Panc1 (cell line): ENCODE measurements at regions of chr9 and their contacts with region 1.

Region 1: DNA sequence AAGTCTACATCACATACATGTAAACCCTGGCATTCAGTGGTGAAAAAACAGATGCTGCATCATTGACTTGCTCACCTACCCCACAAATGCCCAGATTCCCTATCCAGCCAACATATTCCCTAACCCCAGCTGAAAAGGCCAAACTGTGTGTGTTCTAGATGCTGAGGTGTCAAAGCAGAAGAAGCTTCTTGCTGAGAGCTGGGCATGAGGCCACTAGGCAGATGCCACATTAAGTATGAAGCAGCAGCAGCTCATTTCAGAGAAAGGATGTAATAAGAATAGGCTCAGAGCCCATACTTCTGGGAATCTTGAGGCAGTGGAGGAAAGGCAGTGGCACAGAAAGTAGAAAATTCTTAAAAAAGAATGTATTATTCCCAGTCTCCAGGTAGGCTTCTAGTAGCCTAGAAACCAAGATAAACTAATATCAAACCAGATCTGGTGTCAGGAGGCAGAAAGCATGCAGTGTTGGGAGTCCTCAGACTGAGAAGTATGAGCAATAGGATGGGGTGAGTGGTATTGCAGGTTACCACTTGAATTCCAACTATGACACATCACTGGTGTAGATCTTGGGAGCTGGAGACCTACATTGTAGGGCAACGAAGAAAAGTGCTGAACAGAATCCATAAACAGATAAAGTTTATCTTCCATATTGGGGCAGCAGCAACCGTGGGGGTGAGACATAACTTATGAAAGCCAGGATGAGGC is 71.9 kb upstream of the GRHPR start:
- DNase-seq: no peak
- ATAC-seq: peak; percentile 62
- H3K4me3 ChIP-seq: no peak overlapping the region
- H3K27ac ChIP-seq: no peak overlapping the region
- H3K4me1 ChIP-seq: no peaks in the 10 kb centered on the region
- H3K27me3 ChIP-seq: no peaks in the 10 kb centered on the region
- CTCF ChIP-seq: no peak

Region 2: GRCh38 chr9:37302277-37302676 is 48.4 kb before region 1 on chr9:
- CTCF ChIA-PET with region 1: no interaction called
- POLR2A ChIA-PET with region 1: no interaction called
- in situ Hi-C with region 1: loop called (anchors 5 kb)
- intact Hi-C with region 1: no loop called
- DNase-seq: no peak
- ATAC-seq: no peak
- H3K4me3 ChIP-seq: no peak overlapping the region
- H3K27ac ChIP-seq: no peak overlapping the region
- H3K4me1 ChIP-seq: no peaks in the 10 kb centered on the region
- H3K27me3 ChIP-seq: no peaks in the 10 kb centered on the region
- CTCF ChIP-seq: no peak

Region 3: DNA sequence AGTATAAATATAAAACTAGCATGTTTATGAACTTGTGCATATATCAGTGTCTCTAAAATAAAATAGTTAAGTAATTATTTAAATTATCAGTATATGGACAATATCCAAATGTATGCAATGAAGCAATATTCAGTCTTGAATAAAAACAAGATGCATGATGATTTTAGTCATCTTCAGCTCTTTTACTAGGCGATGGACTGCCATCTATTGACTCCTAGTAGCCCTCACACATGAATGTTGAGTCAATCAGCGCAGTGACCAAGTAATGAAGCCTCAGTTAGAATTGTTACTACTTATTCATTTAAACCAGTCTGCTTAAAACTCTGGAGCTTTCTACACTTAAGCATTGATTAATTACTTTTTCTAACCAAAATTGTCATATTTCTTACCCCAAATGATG is 21.1 kb before region 1 on chr9:
- CTCF ChIA-PET with region 1: interaction called, 10 read pairs
- POLR2A ChIA-PET with region 1: no interaction called
- in situ Hi-C with region 1: no loop called
- intact Hi-C with region 1: no loop called
- DNase-seq: peak; percentile 20
- ATAC-seq: peak; percentile 84
- H3K4me3 ChIP-seq: no peak overlapping the region
- H3K27ac ChIP-seq: no peak overlapping the region
- H3K4me1 ChIP-seq: peaks cover 5% of the 10 kb centered on the region; the same call in 1 of the 2 replicates
- H3K27me3 ChIP-seq: no peaks in the 10 kb centered on the region
- CTCF ChIP-seq: peak; percentile 67; the same call in 1 of the 2 replicates

Region 4: GRCh38 chr9:37385286-37385685 is 34.6 kb after region 1 on chr9:
- CTCF ChIA-PET with region 1: no interaction called
- POLR2A ChIA-PET with region 1: no interaction called
- in situ Hi-C with region 1: no loop called
- intact Hi-C with region 1: no loop called
- DNase-seq: no peak
- ATAC-seq: no peak
- H3K4me3 ChIP-seq: no peak overlapping the region
- H3K27ac ChIP-seq: no peak overlapping the region
- H3K4me1 ChIP-seq: no peaks in the 10 kb centered on the region
- H3K27me3 ChIP-seq: no peaks in the 10 kb centered on the region
- CTCF ChIP-seq: no peak

Region 5: DNA sequence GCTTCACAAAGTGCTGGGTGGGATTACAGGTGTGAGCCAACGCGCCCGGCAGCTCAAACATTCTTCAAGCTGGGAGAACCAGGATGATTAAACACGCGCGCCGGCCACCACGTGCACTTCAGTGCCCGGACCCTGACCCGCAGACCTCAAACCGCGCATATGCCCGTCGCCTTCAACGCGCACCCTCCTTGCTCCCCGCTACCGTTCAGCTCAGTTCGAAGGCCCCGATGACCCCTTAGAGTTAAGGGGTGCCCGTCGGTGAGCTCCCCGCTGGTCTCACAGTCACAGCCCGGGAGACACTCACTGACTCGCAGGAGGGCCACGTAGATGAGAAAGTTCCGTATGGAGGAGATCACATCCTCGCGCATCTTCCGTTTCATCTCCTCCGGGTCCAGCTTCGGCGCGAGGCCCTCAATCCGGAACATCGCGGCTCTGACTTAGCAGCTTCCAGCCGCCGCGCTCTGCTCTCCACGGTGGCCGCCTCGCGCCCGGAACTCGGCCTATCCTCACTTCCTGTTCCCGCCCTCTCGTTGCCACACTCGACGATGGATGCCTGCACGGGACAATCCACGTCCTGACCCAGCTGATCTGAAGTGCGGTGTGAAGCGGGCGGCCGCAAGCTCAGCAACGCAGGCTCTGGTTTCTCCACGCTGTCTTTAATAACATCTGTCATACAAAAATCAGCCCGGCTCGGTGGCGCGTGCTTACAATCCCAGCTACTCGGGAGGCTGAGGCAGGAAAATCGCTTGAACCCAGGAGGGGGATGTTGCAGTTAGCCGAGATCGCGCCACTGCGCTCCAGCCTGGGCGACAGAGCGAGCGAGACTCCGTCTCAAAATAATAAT is 241.7 kb after region 1 on chr9 and contains the start of gene TOMM5:
- CTCF ChIA-PET with region 1: no interaction called
- POLR2A ChIA-PET with region 1: no interaction called
- in situ Hi-C with region 1: no loop called
- intact Hi-C with region 1: no loop called
- DNase-seq: peak; percentile 92
- ATAC-seq: peak; percentile 97
- H3K4me3 ChIP-seq: peak within 1 kb of the TSS; percentile 74 to 95
- H3K27ac ChIP-seq: peak within 1 kb of the TSS; percentile 94
- H3K4me1 ChIP-seq: peaks cover 26% of the 10 kb centered on the region
- H3K27me3 ChIP-seq: peaks cover 17% of the 10 kb centered on the region
- CTCF ChIP-seq: no peak
- total RNA-seq, gene TOMM5: 333 TPM

Region 6: DNA sequence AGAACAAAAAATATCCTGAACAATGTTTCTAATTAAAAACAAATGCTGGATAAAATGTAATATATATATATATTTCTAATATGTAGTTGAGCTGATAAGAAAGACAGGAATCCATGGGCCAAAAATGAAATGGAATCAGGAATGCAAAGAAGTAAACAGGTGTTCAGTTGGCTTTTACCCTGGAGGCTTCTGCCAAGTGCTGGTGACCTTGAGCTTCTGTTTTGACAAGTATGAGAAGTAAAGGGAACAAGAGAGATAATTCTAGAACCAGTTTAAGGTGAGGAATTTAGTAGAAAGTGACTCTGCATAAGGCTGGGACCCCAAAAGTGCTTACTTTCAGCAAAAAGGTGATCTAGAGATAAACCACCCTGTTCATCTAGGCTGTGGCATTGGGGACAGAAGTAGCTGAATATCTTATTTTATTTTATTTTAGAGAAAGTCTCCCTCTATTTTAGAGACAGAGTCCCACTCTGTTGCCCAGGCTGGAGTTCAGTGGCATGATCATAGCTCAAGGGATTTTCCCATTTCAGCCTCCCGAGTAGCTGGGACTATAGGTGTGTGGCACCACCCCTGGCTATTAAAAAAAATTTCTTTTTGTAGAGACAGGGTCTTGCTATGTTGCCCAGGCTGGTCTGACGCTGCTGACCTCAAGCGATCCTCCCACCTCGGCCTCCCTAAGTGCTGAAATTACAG is 477.0 kb after region 1 on chr9:
- CTCF ChIA-PET with region 1: interaction called, 10 read pairs
- POLR2A ChIA-PET with region 1: no interaction called
- in situ Hi-C with region 1: no loop called
- intact Hi-C with region 1: no loop called
- DNase-seq: no peak
- ATAC-seq: no peak
- H3K4me3 ChIP-seq: no peak overlapping the region
- H3K27ac ChIP-seq: no peak overlapping the region
- H3K4me1 ChIP-seq: no peaks in the 10 kb centered on the region
- H3K27me3 ChIP-seq: no peaks in the 10 kb centered on the region
- CTCF ChIP-seq: no peak